B cell (primary cell): ENCODE measurements at regions of chr5 and their contacts with region 1.

Region 1: DNA sequence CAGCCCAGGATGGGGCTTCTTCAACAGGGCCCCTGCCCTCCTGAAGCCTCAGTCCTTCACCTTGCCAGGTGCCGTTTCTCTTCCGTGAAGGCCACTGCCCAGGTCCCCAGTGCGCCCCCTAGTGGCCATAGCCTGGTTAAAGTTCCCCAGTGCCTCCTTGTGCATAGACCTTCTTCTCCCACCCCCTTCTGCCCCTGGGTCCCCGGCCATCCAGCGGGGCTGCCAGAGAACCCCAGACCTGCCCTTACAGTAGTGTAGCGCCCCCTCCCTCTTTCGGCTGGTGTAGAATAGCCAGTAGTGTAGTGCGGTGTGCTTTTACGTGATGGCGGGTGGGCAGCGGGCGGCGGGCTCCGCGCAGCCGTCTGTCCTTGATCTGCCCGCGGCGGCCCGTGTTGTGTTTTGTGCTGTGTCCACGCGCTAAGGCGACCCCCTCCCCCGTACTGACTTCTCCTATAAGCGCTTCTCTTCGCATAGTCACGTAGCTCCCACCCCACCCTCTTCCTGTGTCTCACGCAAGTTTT is 23.6 kb downstream of the PCDHGC5 start:
- DNase-seq: peak; percentile 77
- ATAC-seq: peak; percentile 7
- H3K4me3 ChIP-seq: peak overlapping the region; percentile 31 to 74 (median 60)
- H3K4me3 Mint-ChIP-seq: peak overlapping the region; percentile 92
- H3K27ac ChIP-seq: peak overlapping the region in 1 of 2 donors; percentile 0
- H3K27ac Mint-ChIP-seq: peak overlapping the region; percentile 56
- H3K4me1 ChIP-seq: peaks cover 58 to 89% of the 10 kb centered on the region in 2 donors
- H3K4me1 Mint-ChIP-seq: peaks cover 85% of the 10 kb centered on the region
- H3K27me3 ChIP-seq: no peaks in the 10 kb centered on the region
- H3K27me3 Mint-ChIP-seq: no peaks in the 10 kb centered on the region
- CTCF ChIP-seq: peak; percentile 85

Region 2: GRCh38 chr5:141420855-141421496 is 91.5 kb before region 1 on chr5 and contains the start of gene PCDHGA11:
- CTCF ChIA-PET with region 1: interaction called, 17 read pairs
- POLR2A ChIA-PET with region 1: interaction called, 3 read pairs
- intact Hi-C with region 1: no loop called
- DNase-seq: peak; percentile 68
- ATAC-seq: peak; percentile 68
- H3K4me3 ChIP-seq: peak within 1 kb of the TSS; percentile 24 to 53 (median 52)
- H3K4me3 Mint-ChIP-seq: peak within 1 kb of the TSS; percentile 87
- H3K27ac ChIP-seq: no peak within 1 kb of the TSS
- H3K27ac Mint-ChIP-seq: peak within 1 kb of the TSS; percentile 48
- H3K4me1 ChIP-seq: peaks cover 10 to 12% of the 10 kb centered on the region in 2 donors
- H3K4me1 Mint-ChIP-seq: peaks cover 15% of the 10 kb centered on the region
- H3K27me3 ChIP-seq: peaks cover 2 to 71% (median 58%) of the 10 kb centered on the region in 4 experiments
- H3K27me3 Mint-ChIP-seq: peaks cover 57% of the 10 kb centered on the region
- CTCF ChIP-seq: peak; percentile 72
- total RNA-seq, gene PCDHGA11: 1.5 and 1.8 TPM in 2 replicates

Region 3: GRCh38 chr5:141430332-141431113 is 81.9 kb before region 1 on chr5 and contains the start of gene PCDHGA12:
- CTCF ChIA-PET with region 1: interaction called, 14 read pairs
- POLR2A ChIA-PET with region 1: no interaction called
- intact Hi-C with region 1: no loop called
- DNase-seq: peak; percentile 65
- ATAC-seq: peak; percentile 82
- H3K4me3 ChIP-seq: peak within 1 kb of the TSS in 4 of 5 experiments; percentile 30 to 35 (median 32)
- H3K4me3 Mint-ChIP-seq: peak within 1 kb of the TSS; percentile 86
- H3K27ac ChIP-seq: no peak within 1 kb of the TSS
- H3K27ac Mint-ChIP-seq: peak within 1 kb of the TSS; percentile 29
- H3K4me1 ChIP-seq: peaks cover 15 to 17% of the 10 kb centered on the region in 2 donors
- H3K4me1 Mint-ChIP-seq: peaks cover 7% of the 10 kb centered on the region
- H3K27me3 ChIP-seq: peaks cover 0 to 57% (median 30%) of the 10 kb centered on the region in 4 experiments
- H3K27me3 Mint-ChIP-seq: peaks cover 46% of the 10 kb centered on the region
- CTCF ChIP-seq: peak; percentile 68
- total RNA-seq, gene PCDHGA12: 1.6 and 2.8 TPM in 2 replicates

Region 4: GRCh38 chr5:141475625-141476131 is 36.8 kb before region 1 on chr5 and contains the start of gene PCDHGC3:
- CTCF ChIA-PET with region 1: interaction called, 37 read pairs
- POLR2A ChIA-PET with region 1: no interaction called
- intact Hi-C with region 1: loop called (anchors 2 kb)
- DNase-seq: peak; percentile 65
- ATAC-seq: peak; percentile 95
- H3K4me3 ChIP-seq: peak within 1 kb of the TSS; percentile 35 to 64 (median 49)
- H3K4me3 Mint-ChIP-seq: peak within 1 kb of the TSS; percentile 95
- H3K27ac ChIP-seq: no peak within 1 kb of the TSS
- H3K27ac Mint-ChIP-seq: peak within 1 kb of the TSS; percentile 47
- H3K4me1 ChIP-seq: peaks cover 23 to 32% of the 10 kb centered on the region in 2 donors
- H3K4me1 Mint-ChIP-seq: peaks cover 29% of the 10 kb centered on the region
- H3K27me3 ChIP-seq: peaks cover 0 to 47% (median 30%) of the 10 kb centered on the region in 4 experiments
- H3K27me3 Mint-ChIP-seq: peaks cover 36% of the 10 kb centered on the region
- CTCF ChIP-seq: no peak
- total RNA-seq, gene PCDHGC3: 1.9 and 2.0 TPM in 2 replicates

Region 5: GRCh38 chr5:141492168-141492885 is 20.1 kb before region 1 on chr5:
- CTCF ChIA-PET with region 1: interaction called, 13 read pairs
- POLR2A ChIA-PET with region 1: interaction called, 6 read pairs
- intact Hi-C with region 1: loop called (anchors 2 kb)
- DNase-seq: peak; percentile 69
- ATAC-seq: peak; percentile 76
- H3K4me3 ChIP-seq: peak overlapping the region; percentile 9 to 61 (median 39)
- H3K4me3 Mint-ChIP-seq: peak overlapping the region; percentile 95
- H3K27ac ChIP-seq: no peak overlapping the region
- H3K27ac Mint-ChIP-seq: peak overlapping the region; percentile 76
- H3K4me1 ChIP-seq: peaks cover 17 to 21% of the 10 kb centered on the region in 2 donors
- H3K4me1 Mint-ChIP-seq: peaks cover 18% of the 10 kb centered on the region
- H3K27me3 ChIP-seq: peaks cover 0 to 62% (median 20%) of the 10 kb centered on the region in 4 experiments
- H3K27me3 Mint-ChIP-seq: peaks cover 46% of the 10 kb centered on the region
- CTCF ChIP-seq: no peak

Region 6: GRCh38 chr5:141501761-141502160 is 10.7 kb before region 1 on chr5:
- CTCF ChIA-PET with region 1: interaction called, 15 read pairs
- POLR2A ChIA-PET with region 1: no interaction called
- intact Hi-C with region 1: no loop called
- DNase-seq: no peak
- ATAC-seq: no peak
- H3K4me3 ChIP-seq: no peak overlapping the region
- H3K4me3 Mint-ChIP-seq: no peak overlapping the region
- H3K27ac ChIP-seq: no peak overlapping the region
- H3K27ac Mint-ChIP-seq: no peak overlapping the region
- H3K4me1 ChIP-seq: peaks cover 0 to 3% of the 10 kb centered on the region in 2 donors
- H3K4me1 Mint-ChIP-seq: peaks cover 7% of the 10 kb centered on the region
- H3K27me3 ChIP-seq: no peaks in the 10 kb centered on the region
- H3K27me3 Mint-ChIP-seq: peaks cover 6% of the 10 kb centered on the region
- CTCF ChIP-seq: no peak